ENCODE measurements at regions of chr7 and their contacts with region 1.

Region 1: GRCh38 chr7:87231256-87231655 is 11.7 kb upstream of the TMEM243 start:
- DNase-seq: peak; percentile 29 to 76 (median 75)
- ATAC-seq: peak; percentile 70 to 96 (median 91)
- H3K4me3 ChIP-seq: no peak overlapping the region
- H3K27ac ChIP-seq: no peak overlapping the region
- H3K4me1 ChIP-seq: peaks cover 0 to 6% (median 0%) of the 10 kb centered on the region in 4 donors
- H3K27me3 ChIP-seq: no peaks in the 10 kb centered on the region
- CTCF ChIP-seq: no peak
- POLR2A ChIP-seq: no peak

Region 2: GRCh38 chr7:86926732-86927131 is 304.5 kb before region 1 on chr7:
- intact Hi-C with region 1: loop called (anchors 10 kb)
- DNase-seq: no peak
- ATAC-seq: peak; percentile 78 to 86 (median 85)
- H3K4me3 ChIP-seq: no peak overlapping the region
- H3K27ac ChIP-seq: no peak overlapping the region
- H3K4me1 ChIP-seq: no peaks in the 10 kb centered on the region
- H3K27me3 ChIP-seq: no peaks in the 10 kb centered on the region
- CTCF ChIP-seq: peak; percentile 33 to 65 (median 60)
- POLR2A ChIP-seq: no peak

Region 3: DNA sequence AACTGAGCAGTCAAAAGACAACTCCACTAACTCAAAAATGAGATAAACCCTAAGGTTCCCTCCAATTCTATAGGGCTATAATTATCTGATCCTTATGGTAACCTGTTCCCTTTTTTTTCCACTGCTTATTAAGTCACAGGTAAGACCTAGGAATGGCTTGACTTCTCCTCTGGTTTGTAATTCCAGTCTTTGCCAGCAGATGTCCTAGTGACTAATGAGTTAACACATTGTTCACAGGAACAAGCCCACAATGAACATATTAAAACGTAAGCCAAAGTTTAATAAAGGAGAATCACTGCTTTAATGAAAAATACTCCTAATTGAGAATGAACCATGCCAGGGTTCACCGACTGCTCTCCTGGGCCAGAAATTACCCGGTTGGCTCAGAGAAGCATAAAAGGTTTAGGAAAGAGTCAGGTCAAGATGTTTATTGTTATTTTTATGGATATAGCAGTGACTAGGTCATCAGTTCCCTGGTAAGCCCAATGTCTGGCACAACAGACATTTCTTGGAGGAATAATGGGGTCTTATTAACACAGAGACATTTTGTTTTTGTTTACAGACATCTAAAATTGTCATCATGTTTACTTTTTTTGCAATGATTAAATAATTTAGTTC is 291.9 kb before region 1 on chr7:
- intact Hi-C with region 1: loop called in 1 of 2 experiments (anchors 10 kb)
- DNase-seq: peak in 1 of 3 donors; percentile 47
- ATAC-seq: peak; percentile 86 to 93 (median 88)
- H3K4me3 ChIP-seq: no peak overlapping the region
- H3K27ac ChIP-seq: no peak overlapping the region
- H3K4me1 ChIP-seq: no peaks in the 10 kb centered on the region
- H3K27me3 ChIP-seq: no peaks in the 10 kb centered on the region
- CTCF ChIP-seq: peak; percentile 62 to 80 (median 68)
- POLR2A ChIP-seq: no peak

Region 4: GRCh38 chr7:87416682-87417587 is 185.7 kb after region 1 on chr7:
- intact Hi-C with region 1: no loop called
- DNase-seq: no peak
- ATAC-seq: peak; percentile 62 to 82 (median 74)
- H3K4me3 ChIP-seq: no peak overlapping the region
- H3K27ac ChIP-seq: no peak overlapping the region
- H3K4me1 ChIP-seq: no peaks in the 10 kb centered on the region
- H3K27me3 ChIP-seq: no peaks in the 10 kb centered on the region
- CTCF ChIP-seq: peak; percentile 61 to 70 (median 67)
- POLR2A ChIP-seq: no peak

Measured in right lobe of liver (tissue), 6 donors.